ENCODE measurements at regions of chr6 and their contacts with region 1.

Region 1: DNA sequence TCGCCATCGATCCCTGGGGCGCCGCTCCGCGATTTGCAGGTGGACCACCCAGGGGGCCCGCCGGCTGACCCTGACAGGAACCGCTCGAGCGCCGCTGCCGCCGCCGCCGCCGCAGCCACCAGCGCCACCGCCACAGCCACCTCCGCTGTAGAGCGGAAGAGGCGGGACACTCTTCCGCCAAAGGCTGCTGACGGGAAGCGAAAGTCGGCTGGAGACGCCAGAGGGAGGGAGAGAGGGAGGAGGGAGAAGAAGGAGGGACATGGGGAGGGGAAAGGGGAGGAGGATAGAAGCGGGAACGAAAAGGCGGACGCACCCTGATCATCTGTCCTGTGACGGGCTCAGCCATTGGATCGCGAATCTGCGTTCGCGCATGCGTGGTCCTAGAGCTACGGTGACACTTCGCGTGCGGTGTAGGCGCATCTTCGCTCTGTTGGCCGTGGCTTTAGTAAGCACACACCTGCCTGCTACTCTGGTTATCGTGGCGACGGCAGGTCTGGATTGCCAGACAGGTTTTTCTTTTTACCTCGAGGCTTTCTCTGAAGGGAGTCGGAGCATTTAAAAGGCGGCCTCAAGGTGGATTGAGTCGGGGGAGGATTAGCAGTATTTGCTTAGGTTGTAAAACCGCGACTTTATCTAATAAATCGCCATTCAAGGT is at the start of gene TMEM30A:
- DNase-seq: peak; percentile 95 to 99 (median 96)
- ATAC-seq: peak; percentile 88
- H3K4me3 ChIP-seq: peak within 1 kb of the TSS; percentile 95
- H3K27ac ChIP-seq: peak within 1 kb of the TSS; percentile 89
- H3K4me1 ChIP-seq: peaks cover 0 to 15% of the 10 kb centered on the region in 2 experiments; a peak in 3 of 5 replicates
- H3K27me3 ChIP-seq: no peaks in the 10 kb centered on the region
- CTCF ChIP-seq: no peak
- EP300 ChIP-seq: peak; percentile 57
- POLR2A ChIP-seq: peak; percentile 92
- RAD21 ChIP-seq: no peak
- polyA plus RNA-seq, gene TMEM30A: 6.5 to 9.0 TPM

Region 2: GRCh38 chr6:75220357-75220756 is 64.4 kb before region 1 on chr6:
- CTCF ChIA-PET with region 1: no interaction called
- POLR2A ChIA-PET with region 1: no interaction called
- in situ Hi-C with region 1: no loop called
- intact Hi-C with region 1: no loop called
- DNase-seq: no peak
- ATAC-seq: no peak
- H3K4me3 ChIP-seq: no peak overlapping the region
- H3K27ac ChIP-seq: no peak overlapping the region
- H3K4me1 ChIP-seq: no peaks in the 10 kb centered on the region
- H3K27me3 ChIP-seq: no peaks in the 10 kb centered on the region
- CTCF ChIP-seq: no peak
- EP300 ChIP-seq: no peak
- POLR2A ChIP-seq: no peak
- RAD21 ChIP-seq: no peak

Region 3: DNA sequence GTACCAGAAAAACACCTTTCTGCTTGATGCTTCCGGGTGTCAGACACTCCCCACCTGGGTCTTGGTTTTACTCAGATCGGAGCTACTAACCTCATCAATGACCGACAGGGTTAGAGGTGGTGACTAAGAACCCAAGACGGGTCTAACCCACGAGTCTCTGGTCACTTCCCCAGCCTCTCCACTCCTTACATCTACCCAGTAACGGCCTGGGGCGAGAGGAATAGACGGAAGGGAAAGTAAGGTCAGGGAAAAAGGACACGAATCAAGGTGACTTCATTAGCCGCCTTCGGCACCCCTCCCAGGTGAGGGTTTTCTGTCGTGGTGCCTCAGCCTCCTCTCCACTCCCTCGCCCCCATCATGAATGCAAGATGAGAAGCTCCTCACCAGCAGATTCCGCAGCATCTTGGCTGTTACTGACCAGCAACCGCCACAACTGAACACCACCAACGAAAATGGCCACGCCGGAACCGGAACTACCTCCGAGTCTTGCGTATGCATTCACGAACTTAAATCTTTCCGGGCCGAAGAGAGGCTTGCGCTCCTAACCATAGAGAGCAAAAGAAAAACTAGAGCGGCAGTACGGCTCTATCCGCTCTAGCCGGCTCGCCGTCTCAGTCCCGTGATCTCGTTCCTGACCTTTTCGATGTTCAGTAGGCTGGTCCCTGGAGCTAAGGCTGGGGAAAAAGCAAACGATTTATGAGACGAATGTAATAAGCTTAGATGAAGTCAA is 41.3 kb before region 1 on chr6 and contains the start of gene COX7A2:
- CTCF ChIA-PET with region 1: no interaction called
- POLR2A ChIA-PET with region 1: interaction called, 5 read pairs
- in situ Hi-C with region 1: no loop called
- intact Hi-C with region 1: loop called (anchors 1 kb)
- DNase-seq: peak; percentile 78 to 95 (median 82)
- ATAC-seq: peak; percentile 98
- H3K4me3 ChIP-seq: peak within 1 kb of the TSS; percentile 82
- H3K27ac ChIP-seq: peak within 1 kb of the TSS; percentile 98
- H3K4me1 ChIP-seq: peaks cover 4 to 5% of the 10 kb centered on the region in 2 experiments; a peak in 3 of 5 replicates
- H3K27me3 ChIP-seq: no peaks in the 10 kb centered on the region
- CTCF ChIP-seq: no peak
- EP300 ChIP-seq: peak; percentile 60
- POLR2A ChIP-seq: peak; percentile 98
- RAD21 ChIP-seq: no peak
- polyA plus RNA-seq, gene COX7A2: 1,858 to 2,216 TPM

Region 4: GRCh38 chr6:75299801-75300530 is 15.2 kb after region 1 on chr6:
- CTCF ChIA-PET with region 1: no interaction called
- POLR2A ChIA-PET with region 1: no interaction called
- in situ Hi-C with region 1: no loop called
- intact Hi-C with region 1: no loop called
- DNase-seq: no peak
- ATAC-seq: no peak
- H3K4me3 ChIP-seq: no peak overlapping the region
- H3K27ac ChIP-seq: no peak overlapping the region
- H3K4me1 ChIP-seq: no peaks in the 10 kb centered on the region
- H3K27me3 ChIP-seq: peaks cover 0 to 2% of the 10 kb centered on the region in 2 experiments; a peak in 2 of 5 replicates
- CTCF ChIP-seq: no peak
- EP300 ChIP-seq: no peak
- POLR2A ChIP-seq: no peak
- RAD21 ChIP-seq: no peak

Region 5: DNA sequence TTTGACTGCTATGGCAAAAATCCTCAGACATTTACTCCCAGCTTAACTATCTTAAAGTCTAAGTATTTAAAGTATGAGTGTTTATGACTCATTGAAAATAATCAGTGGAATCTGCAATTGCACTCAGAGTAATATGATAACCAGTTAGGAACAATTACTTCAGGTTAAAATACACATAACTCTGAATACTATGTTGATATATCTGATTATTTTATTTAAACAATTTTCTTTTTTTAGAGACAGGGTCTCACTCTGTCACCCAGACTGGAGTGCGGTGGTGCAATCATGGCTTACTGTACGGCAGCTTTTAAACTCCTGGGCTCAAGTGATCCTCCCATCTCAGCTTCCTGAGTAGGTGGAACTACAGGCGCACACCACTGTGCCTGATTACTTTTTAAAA is 165.0 kb after region 1 on chr6:
- CTCF ChIA-PET with region 1: no interaction called
- POLR2A ChIA-PET with region 1: no interaction called
- in situ Hi-C with region 1: no loop called
- intact Hi-C with region 1: no loop called
- DNase-seq: no peak
- ATAC-seq: no peak
- H3K4me3 ChIP-seq: no peak overlapping the region
- H3K27ac ChIP-seq: no peak overlapping the region
- H3K4me1 ChIP-seq: no peaks in the 10 kb centered on the region
- H3K27me3 ChIP-seq: no peaks in the 10 kb centered on the region
- CTCF ChIP-seq: no peak
- EP300 ChIP-seq: no peak
- POLR2A ChIP-seq: no peak
- RAD21 ChIP-seq: no peak

Region 6: DNA sequence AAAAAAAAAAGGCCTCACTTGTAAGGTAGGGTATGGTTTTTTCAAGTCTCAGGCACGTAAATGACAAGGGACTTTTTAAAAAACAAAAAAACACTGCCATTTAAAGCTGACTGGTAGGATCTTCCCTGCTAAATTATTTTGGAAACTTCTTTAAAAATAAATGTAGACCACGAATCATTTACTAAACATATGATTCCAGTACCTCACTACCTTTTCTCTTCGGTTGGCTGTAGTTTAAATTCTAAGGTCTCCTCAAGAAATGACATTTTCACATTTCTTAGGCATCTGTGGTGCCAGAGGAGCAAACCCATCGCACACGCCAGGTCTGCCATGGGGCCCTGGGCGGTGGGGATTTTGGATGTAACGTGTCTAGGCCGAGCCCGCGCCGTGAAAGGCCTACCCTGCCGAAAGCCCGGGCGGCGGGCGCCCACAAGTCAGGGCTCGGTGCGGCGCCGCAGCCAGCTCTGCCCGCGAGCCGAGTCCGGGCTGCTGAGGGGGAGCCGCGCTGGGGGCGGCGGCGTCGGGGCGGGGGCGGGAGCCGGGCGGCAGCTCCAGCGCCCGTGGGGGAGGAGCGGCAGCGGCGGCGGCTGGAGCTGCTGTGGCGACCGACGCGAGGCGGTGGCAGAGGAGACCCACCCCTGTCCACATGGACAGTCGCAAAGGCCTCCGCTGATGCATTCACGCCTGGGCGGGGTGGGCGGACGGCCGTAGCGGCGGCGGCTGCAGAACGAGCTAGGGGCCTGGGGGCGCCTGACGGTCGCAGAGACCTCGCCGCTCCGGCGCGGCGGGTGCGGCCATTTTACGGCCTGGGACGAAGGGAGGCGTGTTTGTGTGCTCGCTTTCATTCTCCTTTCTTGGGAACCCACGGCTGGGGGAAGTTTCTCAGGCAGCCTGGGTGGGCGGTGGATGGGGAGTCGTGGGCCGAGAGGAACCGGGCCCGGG is 316.8 kb after region 1 on chr6 and contains the start of gene SENP6:
- CTCF ChIA-PET with region 1: no interaction called
- POLR2A ChIA-PET with region 1: interaction called, 4 read pairs
- in situ Hi-C with region 1: no loop called
- intact Hi-C with region 1: loop called (anchors 10 kb)
- DNase-seq: peak; percentile 82 to 87 (median 85)
- ATAC-seq: peak; percentile 87
- H3K4me3 ChIP-seq: peak within 1 kb of the TSS; percentile 89
- H3K27ac ChIP-seq: peak within 1 kb of the TSS; percentile 95
- H3K4me1 ChIP-seq: peaks cover 8 to 17% of the 10 kb centered on the region in 2 experiments; a peak in 4 of 5 replicates
- H3K27me3 ChIP-seq: no peaks in the 10 kb centered on the region
- CTCF ChIP-seq: no peak
- EP300 ChIP-seq: no peak
- POLR2A ChIP-seq: peak; percentile 84
- RAD21 ChIP-seq: no peak
- polyA plus RNA-seq, gene SENP6: 11.1 to 12.6 TPM